Posterior vena cava (tissue), 2 donors: ENCODE measurements at regions of chr5 and their contacts with region 1.

Region 1: GRCh38 chr5:3526551-3527185 is 69.0 kb upstream of the IRX1 start:
- DNase-seq: no peak

Region 2: GRCh38 chr5:3489239-3489843 is 37.3 kb before region 1 on chr5:
- intact Hi-C with region 1: no loop called
- DNase-seq: no peak

Region 3: GRCh38 chr5:4294878-4295277 is 768.2 kb after region 1 on chr5:
- intact Hi-C with region 1: loop called in 1 of 2 experiments (anchors 5 kb)
- DNase-seq: no peak

Region 4: DNA sequence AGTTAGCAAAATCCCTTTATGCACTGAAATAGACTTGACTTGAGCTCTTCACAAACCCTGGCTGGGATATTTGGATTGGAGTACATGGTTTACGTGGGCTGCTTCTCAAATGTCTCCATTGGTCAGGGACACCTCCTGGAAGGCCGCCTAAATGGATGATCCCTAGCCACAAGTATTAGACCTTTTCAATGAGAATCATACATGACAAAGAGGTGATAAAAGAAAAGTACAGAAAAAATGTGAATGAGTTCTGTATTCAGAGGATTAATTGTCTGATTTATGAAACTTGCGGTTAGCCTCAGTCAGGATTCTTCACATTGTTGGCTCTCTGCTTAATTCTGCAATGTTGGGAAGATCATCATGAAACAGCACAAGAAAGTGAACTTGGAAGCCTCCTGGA is 860.6 kb after region 1 on chr5:
- intact Hi-C with region 1: no loop called
- DNase-seq: no peak